Activated naive CD4-positive, alpha-beta T cell treated with anti-CD3 and anti-CD28 coated beads for 36 hours (primary cell): ENCODE measurements at regions of chr17 and their contacts with region 1.

Region 1: DNA sequence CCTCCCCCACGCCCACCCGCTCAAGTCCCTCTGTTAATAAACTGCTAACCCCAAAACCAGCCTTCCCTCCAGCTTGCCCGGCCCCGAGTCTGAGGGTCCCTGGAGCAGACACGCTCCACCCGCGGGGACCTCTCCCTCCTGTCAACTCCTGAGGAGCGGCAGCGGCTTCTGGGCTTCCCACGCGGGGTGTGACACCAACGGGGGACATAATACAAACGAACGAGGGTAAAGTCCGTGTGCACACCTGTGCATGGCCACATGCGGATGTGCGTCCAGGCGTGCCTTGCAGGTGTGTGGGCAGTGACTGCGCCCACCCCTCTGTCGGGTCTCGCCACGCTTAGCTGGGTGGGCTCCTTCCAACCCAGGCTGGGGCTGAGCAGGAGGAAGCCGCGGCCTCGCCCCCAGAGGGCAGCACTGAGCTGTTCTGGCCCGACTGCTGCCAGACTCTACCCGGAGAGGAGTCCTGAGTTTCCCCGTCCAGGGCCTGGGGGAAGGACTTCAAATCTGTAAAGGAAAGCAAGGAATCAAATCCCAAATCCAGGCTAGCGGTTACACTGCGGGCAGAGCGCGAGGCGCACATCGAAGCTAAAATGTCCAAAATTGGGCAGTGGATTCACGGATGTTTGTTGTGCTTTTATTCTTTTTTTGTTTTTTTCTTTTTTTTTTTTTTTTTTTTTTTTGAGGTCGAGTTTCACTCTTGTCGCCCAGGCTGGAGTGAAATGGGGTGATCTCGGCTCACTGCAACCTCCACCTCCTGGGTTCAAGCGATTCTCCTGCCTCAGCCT is 24.2 kb upstream of the KRT17 start:
- DNase-seq: peak; percentile 89
- H3K4me3 Mint-ChIP-seq: peak overlapping the region; percentile 43
- H3K27ac Mint-ChIP-seq: no peak overlapping the region
- H3K4me1 Mint-ChIP-seq: peaks cover 8% of the 10 kb centered on the region
- H3K27me3 Mint-ChIP-seq: no peaks in the 10 kb centered on the region

Region 2: DNA sequence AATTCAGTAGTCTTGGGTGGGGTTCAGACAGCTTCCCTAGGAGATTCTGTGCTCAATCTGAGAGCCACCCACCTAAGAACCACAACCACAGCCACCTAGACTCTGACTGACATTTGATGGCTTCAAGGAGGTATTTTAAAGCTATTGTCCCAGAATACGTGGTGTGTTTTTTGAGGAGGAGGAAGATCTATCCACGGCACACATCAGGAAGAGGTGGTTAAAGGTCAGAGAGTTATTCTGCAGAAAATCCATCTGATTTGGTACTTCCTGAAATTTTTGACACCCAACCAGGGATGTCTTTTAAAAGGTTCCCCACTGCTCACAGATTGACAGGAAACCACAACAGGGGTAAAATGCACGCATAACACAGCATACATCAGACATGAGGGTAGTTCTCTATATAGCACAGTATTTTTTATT is 1026.1 kb before region 1 on chr17:
- CTCF ChIA-PET with region 1: no interaction called
- intact Hi-C with region 1: loop called (anchors 5 kb)
- DNase-seq: no peak
- H3K4me3 Mint-ChIP-seq: no peak overlapping the region
- H3K27ac Mint-ChIP-seq: no peak overlapping the region
- H3K4me1 Mint-ChIP-seq: peaks cover 51% of the 10 kb centered on the region
- H3K27me3 Mint-ChIP-seq: no peaks in the 10 kb centered on the region

Region 3: GRCh38 chr17:40803617-40804082 is 845.0 kb before region 1 on chr17:
- CTCF ChIA-PET with region 1: interaction called, 4 read pairs
- intact Hi-C with region 1: loop called (anchors 5 kb)
- DNase-seq: peak; percentile 90
- H3K4me3 Mint-ChIP-seq: no peak overlapping the region
- H3K27ac Mint-ChIP-seq: no peak overlapping the region
- H3K4me1 Mint-ChIP-seq: no peaks in the 10 kb centered on the region
- H3K27me3 Mint-ChIP-seq: peaks cover 23% of the 10 kb centered on the region

Region 4: DNA sequence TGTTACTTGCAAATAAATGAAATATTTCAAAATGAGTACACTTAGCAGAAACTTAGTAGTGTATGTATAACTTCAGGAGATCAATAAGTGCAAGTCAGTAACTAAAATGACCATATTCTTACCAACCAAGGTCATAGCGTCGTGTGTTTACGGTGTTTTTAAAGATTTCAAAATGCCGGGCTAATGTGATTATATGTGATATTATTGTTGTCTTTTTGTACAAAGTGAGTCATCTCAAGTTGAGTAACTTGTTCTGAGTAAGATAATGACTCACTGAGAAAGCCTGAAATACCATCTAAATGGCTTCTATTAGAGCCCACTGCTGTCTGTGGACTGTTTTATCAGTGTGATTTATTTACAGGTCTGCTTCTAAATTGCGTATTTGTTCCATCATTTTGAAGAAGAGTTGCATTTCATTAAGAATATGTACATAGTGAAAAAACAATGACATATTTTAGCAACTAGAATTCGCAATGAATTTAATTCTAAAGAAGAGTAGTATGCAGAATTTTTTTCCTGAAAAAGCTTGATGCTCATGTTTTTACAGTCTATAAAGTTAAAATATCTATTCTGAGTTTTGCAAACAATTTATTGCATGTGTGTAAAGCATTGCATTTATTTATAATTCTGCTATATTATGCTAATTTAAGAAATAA is 794.3 kb before region 1 on chr17:
- CTCF ChIA-PET with region 1: interaction called, 10 read pairs
- intact Hi-C with region 1: loop called (anchors 2 kb)
- DNase-seq: no peak
- H3K4me3 Mint-ChIP-seq: no peak overlapping the region
- H3K27ac Mint-ChIP-seq: no peak overlapping the region
- H3K4me1 Mint-ChIP-seq: peaks cover 2% of the 10 kb centered on the region
- H3K27me3 Mint-ChIP-seq: peaks cover 5% of the 10 kb centered on the region

Region 5: DNA sequence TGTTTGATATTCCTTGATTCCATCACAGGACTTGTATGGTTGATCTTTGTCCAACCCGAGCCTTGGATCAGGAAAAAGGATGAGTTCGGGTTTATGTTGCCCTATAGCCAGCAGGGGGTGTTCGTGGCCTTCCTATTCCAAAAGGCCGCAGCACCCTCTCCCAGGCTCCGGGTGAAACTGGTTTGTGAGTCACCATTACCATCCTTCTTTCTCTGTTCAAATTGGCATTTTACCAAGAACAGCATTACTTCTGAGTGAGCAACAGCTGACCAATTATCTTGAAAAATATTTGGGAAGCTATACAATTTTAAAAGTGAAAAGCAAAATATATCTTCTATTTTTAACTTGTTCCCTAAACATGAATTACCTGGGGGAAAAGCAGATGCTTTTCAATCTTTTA is 739.3 kb before region 1 on chr17:
- CTCF ChIA-PET with region 1: no interaction called
- intact Hi-C with region 1: loop called (anchors 2 kb)
- DNase-seq: peak; percentile 74
- H3K4me3 Mint-ChIP-seq: no peak overlapping the region
- H3K27ac Mint-ChIP-seq: no peak overlapping the region
- H3K4me1 Mint-ChIP-seq: no peaks in the 10 kb centered on the region
- H3K27me3 Mint-ChIP-seq: peaks cover 20% of the 10 kb centered on the region

Region 6: GRCh38 chr17:41464682-41465081 is 183.9 kb before region 1 on chr17:
- CTCF ChIA-PET with region 1: no interaction called
- intact Hi-C with region 1: no loop called
- DNase-seq: no peak
- H3K4me3 Mint-ChIP-seq: no peak overlapping the region
- H3K27ac Mint-ChIP-seq: no peak overlapping the region
- H3K4me1 Mint-ChIP-seq: no peaks in the 10 kb centered on the region
- H3K27me3 Mint-ChIP-seq: no peaks in the 10 kb centered on the region

Region 7: DNA sequence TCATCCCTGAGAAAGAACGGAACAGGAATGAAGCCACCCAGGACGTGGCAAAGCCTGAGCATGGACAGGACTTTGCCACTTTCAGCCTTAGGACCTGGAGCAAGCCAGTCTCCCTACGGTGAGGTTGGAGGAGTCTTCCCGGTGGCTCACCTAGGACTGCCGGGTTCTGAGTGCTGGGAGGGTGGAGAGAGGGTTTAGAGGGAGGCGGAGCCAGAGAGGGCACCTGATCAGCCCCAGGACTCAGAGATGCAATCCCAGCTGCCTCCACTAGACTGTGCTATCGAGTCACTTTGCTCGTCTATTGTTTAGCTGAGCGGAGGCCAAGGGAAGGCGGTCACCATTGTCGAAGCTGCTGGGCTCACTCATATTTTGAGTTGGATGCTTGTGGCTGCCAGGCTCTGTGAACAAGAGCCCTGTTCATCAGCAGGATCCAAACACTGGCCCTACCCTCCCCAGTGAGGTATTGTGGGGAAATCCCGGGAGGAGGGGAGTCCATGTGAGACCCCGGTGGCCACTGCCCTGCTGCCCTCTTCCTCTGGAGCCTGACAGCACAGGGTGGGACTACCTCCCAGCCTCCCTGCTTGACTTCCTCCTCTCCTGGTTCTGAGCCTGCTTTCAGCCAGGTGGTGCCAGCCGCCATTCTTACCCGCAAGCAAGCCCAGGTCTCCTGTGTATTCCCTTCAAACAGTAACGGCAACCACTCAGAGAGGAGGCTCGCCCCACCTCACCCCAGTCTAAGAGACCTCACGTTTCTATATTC is 68.9 kb before region 1 on chr17:
- CTCF ChIA-PET with region 1: interaction called, 7 read pairs
- intact Hi-C with region 1: loop called (anchors 1 kb)
- DNase-seq: peak; percentile 91
- H3K4me3 Mint-ChIP-seq: no peak overlapping the region
- H3K27ac Mint-ChIP-seq: no peak overlapping the region
- H3K4me1 Mint-ChIP-seq: no peaks in the 10 kb centered on the region
- H3K27me3 Mint-ChIP-seq: peaks cover 35% of the 10 kb centered on the region

Region 8: GRCh38 chr17:41678907-41679739 is 30.5 kb after region 1 on chr17:
- CTCF ChIA-PET with region 1: interaction called, 12 read pairs
- intact Hi-C with region 1: no loop called
- DNase-seq: peak; percentile 87
- H3K4me3 Mint-ChIP-seq: peak overlapping the region; percentile 83
- H3K27ac Mint-ChIP-seq: peak overlapping the region; percentile 98
- H3K4me1 Mint-ChIP-seq: peaks cover 45% of the 10 kb centered on the region
- H3K27me3 Mint-ChIP-seq: no peaks in the 10 kb centered on the region